HEK293 (cell line): ENCODE measurements at regions of chr10 and their contacts with region 1.

Region 1: GRCh38 chr10:50367732-50368131 is 116.4 kb upstream of the ASAH2 start:
- H3K4me3 ChIP-seq: no peak overlapping the region
- H3K27ac ChIP-seq: no peak overlapping the region
- H3K4me1 ChIP-seq: no peaks in the 10 kb centered on the region
- CTCF ChIP-seq: no peak

Region 2: DNA sequence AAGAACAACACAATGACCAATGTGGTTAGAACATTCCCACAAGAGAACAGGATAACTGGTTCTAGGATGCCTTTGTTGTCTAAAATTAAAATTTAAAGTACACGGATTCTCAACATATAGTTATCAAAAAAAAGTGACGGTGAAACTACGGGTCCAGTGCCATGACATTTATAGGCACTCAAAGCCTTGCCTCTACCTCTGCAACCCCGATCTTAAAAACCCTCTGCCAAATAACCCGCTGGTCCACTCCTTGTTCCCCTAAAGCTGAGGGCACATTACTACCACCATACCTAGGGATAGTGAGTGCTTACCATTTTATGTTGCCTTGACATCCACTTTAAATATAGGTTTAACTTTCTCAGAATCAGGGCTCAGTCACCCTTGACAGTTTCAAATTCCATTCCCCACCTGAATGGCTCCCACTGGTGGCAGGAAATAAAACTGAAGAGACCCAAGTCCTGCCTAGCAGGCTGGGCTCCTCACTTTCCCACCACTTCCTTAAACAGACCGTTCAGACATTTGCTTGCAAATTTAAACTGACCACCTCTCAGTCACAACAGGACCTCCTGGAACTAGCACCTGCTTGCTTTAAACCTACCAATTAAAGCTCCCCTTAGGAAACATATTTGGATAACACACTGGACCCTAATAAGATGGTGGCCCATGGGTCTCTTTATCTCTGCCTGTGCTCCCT is 53.4 kb after region 1 on chr10:
- CTCF ChIA-PET with region 1: interaction called, 29 read pairs
- POLR2A ChIA-PET with region 1: no interaction called
- H3K4me3 ChIP-seq: no peak overlapping the region
- H3K27ac ChIP-seq: no peak overlapping the region
- H3K4me1 ChIP-seq: 0 out of 2 replicates have a peak, but pooled peaks cover 3% of the 10 kb centered on the region
- CTCF ChIP-seq: peak; percentile 42; the same call in 1 of the 2 replicates

Region 3: GRCh38 chr10:50508315-50509051 is 140.8 kb after region 1 on chr10:
- CTCF ChIA-PET with region 1: no interaction called
- POLR2A ChIA-PET with region 1: no interaction called
- H3K4me3 ChIP-seq: no peak overlapping the region
- H3K27ac ChIP-seq: no peak overlapping the region
- H3K4me1 ChIP-seq: peaks cover 27% of the 10 kb centered on the region
- CTCF ChIP-seq: no peak

Region 4: DNA sequence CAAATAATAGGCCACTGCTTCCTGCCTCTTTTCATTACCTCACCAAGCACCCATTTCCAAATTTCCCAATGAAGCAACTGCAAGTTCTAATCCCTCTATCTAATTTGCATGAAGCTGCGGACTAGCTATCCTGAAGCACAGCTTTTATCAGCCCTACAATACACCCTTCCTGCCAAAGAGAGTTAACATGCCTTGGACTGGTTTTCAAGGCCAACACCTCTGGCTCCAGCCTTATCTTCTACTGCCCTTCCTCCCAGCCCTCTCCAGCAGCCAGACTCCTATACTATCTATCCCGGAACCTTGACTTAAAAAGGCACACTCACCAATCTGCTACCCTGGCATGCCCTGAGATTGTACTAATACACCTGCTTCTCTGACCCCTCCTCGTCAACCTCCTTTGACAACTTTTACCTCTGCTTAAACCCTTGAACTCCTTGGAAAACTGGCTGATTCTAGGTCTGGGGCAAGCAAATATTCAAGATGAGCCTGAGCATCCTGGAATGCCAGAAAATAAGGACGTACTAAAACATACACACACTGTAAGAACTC is 182.6 kb after region 1 on chr10:
- CTCF ChIA-PET with region 1: no interaction called
- POLR2A ChIA-PET with region 1: no interaction called
- H3K4me3 ChIP-seq: no peak overlapping the region
- H3K27ac ChIP-seq: no peak overlapping the region
- H3K4me1 ChIP-seq: 0 out of 2 replicates have a peak, but pooled peaks cover 3% of the 10 kb centered on the region
- CTCF ChIP-seq: no peak